Uterus (tissue), 4 donors: ENCODE measurements at regions of chr6 and their contacts with region 1.

Region 1: DNA sequence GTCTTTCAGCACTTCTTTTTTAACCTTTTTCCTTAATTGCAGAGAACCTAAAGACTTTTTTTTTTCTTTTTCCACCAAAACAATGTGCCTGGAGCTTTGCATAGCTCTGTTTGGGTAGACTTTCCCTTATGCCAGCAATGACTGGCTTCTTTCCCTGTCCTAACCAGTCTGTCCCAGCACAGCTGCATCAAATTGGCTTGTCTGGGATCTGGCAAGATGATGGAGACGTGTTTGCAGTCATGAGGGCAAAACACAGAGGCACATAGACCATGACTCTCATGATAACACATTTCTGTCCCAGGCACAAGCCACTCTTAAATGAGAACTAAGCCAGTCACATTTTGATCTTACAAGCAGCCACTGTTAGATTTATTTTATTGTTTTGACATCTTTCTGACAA is 16.5 kb downstream of the HEY2 start:
- DNase-seq: no peak
- H3K4me3 ChIP-seq: no peak overlapping the region
- H3K27ac ChIP-seq: no peak overlapping the region
- H3K4me1 ChIP-seq: no peaks in the 10 kb centered on the region
- H3K27me3 ChIP-seq: no peaks in the 10 kb centered on the region
- CTCF ChIP-seq: no peak
- POLR2A ChIP-seq: no peak

Region 2: GRCh38 chr6:125314019-125314581 is 451.8 kb before region 1 on chr6:
- intact Hi-C with region 1: loop called (anchors 5 kb)
- DNase-seq: peak; percentile 37 to 55
- H3K4me3 ChIP-seq: no peak overlapping the region
- H3K27ac ChIP-seq: peak overlapping the region in 1 of 2 donors; percentile 21
- H3K4me1 ChIP-seq: no peaks in the 10 kb centered on the region
- H3K27me3 ChIP-seq: no peaks in the 10 kb centered on the region
- CTCF ChIP-seq: peak; percentile 49 to 75 (median 68)
- POLR2A ChIP-seq: no peak